ENCODE measurements at regions of chr2 and their contacts with region 1.

Region 1: DNA sequence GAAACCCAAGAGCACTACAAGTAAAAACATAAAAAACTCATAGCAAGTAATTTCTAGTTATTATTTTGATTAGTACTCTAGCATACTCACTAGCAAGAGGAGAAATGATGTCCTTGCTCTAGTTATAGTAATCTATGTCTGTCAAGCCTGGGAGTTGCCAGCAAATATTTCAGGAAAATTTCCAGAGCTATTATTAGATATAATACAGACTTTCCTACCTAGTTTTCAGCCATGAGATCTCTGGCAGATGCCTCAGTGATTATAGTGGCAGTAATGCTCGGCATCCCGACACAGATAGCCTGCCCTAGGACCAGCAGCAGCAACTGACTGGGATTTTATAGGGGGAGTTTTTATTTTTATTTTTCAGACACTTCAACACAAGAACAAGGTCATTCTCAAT is 224.4 kb downstream of the ZNF385B start:
- DNase-seq: no peak

Region 2: DNA sequence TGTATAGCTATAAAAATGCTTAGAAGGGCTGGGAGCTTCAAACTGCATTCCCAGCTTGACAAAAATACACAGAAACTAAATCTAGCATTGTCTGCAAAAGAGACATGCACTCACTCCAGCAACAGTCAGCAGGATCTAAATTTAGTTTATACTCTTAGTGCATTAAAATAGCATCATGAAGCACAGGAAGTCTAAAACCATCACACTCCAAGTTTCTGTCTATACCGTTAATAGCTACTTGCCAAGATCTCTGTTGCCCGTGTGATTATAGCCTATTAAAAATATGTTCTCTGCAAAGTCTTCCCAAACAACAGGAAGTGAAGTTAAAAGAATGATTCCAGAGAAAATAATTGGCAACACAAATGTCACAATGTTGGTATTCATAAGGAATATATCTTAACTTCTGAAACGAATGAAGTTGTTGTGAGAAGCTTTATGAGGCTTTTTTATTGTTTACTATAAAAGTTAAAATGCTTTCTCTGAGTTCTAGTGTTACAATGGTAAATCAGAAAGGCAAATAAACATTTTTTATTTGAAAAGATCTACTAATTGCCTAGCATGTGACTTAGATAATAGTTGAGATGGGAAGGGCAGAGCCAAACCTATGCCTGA is 40.2 kb after region 1 on chr2:
- intact Hi-C with region 1: loop called (anchors 5 kb)
- DNase-seq: no peak

Measured in cardiac septum (tissue), 1 donor.